Caco-2 (cell line): ENCODE measurements at regions of chr3 and their contacts with region 1.

Region 1: GRCh38 chr3:189233225-189233858 is 61.6 kb downstream of the TPRG1 start:
- DNase-seq: peak; percentile 68 to 70
- H3K4me3 ChIP-seq: no peak overlapping the region
- H3K4me3 Mint-ChIP-seq: no peak overlapping the region
- H3K27ac Mint-ChIP-seq: no peak overlapping the region
- H3K4me1 ChIP-seq: peaks cover 8% of the 10 kb centered on the region; the same call in 1 of the 2 replicates
- H3K4me1 Mint-ChIP-seq: peaks cover 14% of the 10 kb centered on the region
- H3K27me3 ChIP-seq: no peaks in the 10 kb centered on the region
- H3K27me3 Mint-ChIP-seq: no peaks in the 10 kb centered on the region
- CTCF ChIP-seq: peak; percentile 79 to 81

Region 2: DNA sequence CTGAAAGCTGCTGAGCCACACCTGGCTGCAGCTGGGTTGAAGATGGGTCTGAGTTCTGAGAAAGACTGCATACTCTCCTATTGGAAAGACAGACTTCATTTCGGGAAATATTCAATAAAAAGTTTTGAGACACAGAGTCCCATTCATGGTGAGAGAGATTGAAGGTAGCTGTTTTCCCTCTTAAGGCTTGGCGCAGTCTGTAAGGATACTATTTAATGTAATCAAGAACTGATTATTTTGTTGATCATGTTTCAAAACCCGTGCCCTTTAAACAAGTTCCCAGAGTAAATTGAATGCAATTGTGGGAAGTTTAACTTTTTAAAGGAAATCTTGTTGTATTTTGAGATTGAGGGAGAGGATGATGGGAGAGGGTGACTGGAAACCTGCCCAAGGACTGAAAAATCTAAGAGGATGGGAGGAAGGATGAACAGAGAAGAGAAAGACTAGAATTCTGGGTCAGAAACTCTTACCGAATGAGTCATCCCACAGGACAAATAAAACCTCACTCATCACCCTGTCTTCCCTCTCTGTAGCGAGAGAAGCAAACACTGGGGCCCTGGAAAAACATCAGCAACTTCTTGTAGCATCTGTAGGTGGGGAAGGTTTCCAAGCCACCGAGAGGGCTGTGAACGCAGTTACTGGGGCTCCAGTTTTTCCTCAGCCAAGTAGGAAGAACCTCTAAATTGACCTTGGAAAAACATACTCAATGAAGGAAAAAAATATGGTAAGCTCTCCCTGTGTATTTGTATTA is 254.7 kb before region 1 on chr3:
- CTCF ChIA-PET with region 1: no interaction called
- POLR2A ChIA-PET with region 1: no interaction called
- intact Hi-C with region 1: loop called (anchors 5 kb)
- DNase-seq: no peak
- H3K4me3 ChIP-seq: no peak overlapping the region
- H3K4me3 Mint-ChIP-seq: no peak overlapping the region
- H3K27ac Mint-ChIP-seq: no peak overlapping the region
- H3K4me1 ChIP-seq: no peaks in the 10 kb centered on the region
- H3K4me1 Mint-ChIP-seq: peaks cover 6% of the 10 kb centered on the region
- H3K27me3 ChIP-seq: no peaks in the 10 kb centered on the region
- H3K27me3 Mint-ChIP-seq: no peaks in the 10 kb centered on the region
- CTCF ChIP-seq: no peak

Region 3: DNA sequence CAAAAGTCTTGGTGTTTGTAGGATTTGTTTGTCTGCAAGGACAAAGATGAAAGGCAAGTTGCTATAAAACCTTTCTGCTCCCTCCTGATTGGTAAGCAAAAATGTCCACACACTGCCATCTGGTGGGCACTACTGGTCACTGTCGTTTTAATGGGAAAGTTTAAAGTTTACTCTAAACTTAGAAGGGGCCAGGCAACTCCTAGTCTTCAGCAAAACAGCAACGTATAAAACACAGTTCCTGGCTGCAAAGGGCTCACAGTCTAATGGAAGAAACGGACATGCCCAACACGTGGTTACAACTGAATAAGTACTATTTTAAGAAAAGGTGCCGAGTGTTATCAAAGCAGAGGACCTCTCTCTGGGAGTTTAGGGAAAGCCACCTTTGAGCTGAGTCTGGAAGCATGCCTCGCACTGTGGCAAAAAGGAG is 85.2 kb before region 1 on chr3:
- CTCF ChIA-PET with region 1: interaction called, 7 read pairs
- POLR2A ChIA-PET with region 1: interaction called, 3 read pairs
- intact Hi-C with region 1: loop called (anchors 1 kb)
- DNase-seq: peak; percentile 57 to 66
- H3K4me3 ChIP-seq: no peak overlapping the region
- H3K4me3 Mint-ChIP-seq: no peak overlapping the region
- H3K27ac Mint-ChIP-seq: no peak overlapping the region
- H3K4me1 ChIP-seq: no peaks in the 10 kb centered on the region
- H3K4me1 Mint-ChIP-seq: peaks cover 13% of the 10 kb centered on the region
- H3K27me3 ChIP-seq: no peaks in the 10 kb centered on the region
- H3K27me3 Mint-ChIP-seq: no peaks in the 10 kb centered on the region
- CTCF ChIP-seq: peak; percentile 66 to 74

Region 4: GRCh38 chr3:189188466-189188865 is 44.9 kb before region 1 on chr3:
- CTCF ChIA-PET with region 1: no interaction called
- POLR2A ChIA-PET with region 1: no interaction called
- intact Hi-C with region 1: loop called (anchors 2 kb)
- DNase-seq: peak; percentile 49 to 70
- H3K4me3 ChIP-seq: no peak overlapping the region
- H3K4me3 Mint-ChIP-seq: peak overlapping the region; percentile 63
- H3K27ac Mint-ChIP-seq: peak overlapping the region; percentile 86
- H3K4me1 ChIP-seq: peaks cover 20% of the 10 kb centered on the region
- H3K4me1 Mint-ChIP-seq: peaks cover 12% of the 10 kb centered on the region
- H3K27me3 ChIP-seq: no peaks in the 10 kb centered on the region
- H3K27me3 Mint-ChIP-seq: no peaks in the 10 kb centered on the region
- CTCF ChIP-seq: no peak

Region 5: GRCh38 chr3:189419038-189419437 is 185.7 kb after region 1 on chr3:
- CTCF ChIA-PET with region 1: no interaction called
- POLR2A ChIA-PET with region 1: no interaction called
- intact Hi-C with region 1: no loop called
- DNase-seq: no peak
- H3K4me3 ChIP-seq: no peak overlapping the region
- H3K4me3 Mint-ChIP-seq: no peak overlapping the region
- H3K27ac Mint-ChIP-seq: no peak overlapping the region
- H3K4me1 ChIP-seq: no peaks in the 10 kb centered on the region
- H3K4me1 Mint-ChIP-seq: no peaks in the 10 kb centered on the region
- H3K27me3 ChIP-seq: no peaks in the 10 kb centered on the region
- H3K27me3 Mint-ChIP-seq: peaks cover 7% of the 10 kb centered on the region
- CTCF ChIP-seq: no peak